Cardiac septum (tissue), 1 donor: ENCODE measurements at regions of chr14 and their contacts with region 1.

Region 1: DNA sequence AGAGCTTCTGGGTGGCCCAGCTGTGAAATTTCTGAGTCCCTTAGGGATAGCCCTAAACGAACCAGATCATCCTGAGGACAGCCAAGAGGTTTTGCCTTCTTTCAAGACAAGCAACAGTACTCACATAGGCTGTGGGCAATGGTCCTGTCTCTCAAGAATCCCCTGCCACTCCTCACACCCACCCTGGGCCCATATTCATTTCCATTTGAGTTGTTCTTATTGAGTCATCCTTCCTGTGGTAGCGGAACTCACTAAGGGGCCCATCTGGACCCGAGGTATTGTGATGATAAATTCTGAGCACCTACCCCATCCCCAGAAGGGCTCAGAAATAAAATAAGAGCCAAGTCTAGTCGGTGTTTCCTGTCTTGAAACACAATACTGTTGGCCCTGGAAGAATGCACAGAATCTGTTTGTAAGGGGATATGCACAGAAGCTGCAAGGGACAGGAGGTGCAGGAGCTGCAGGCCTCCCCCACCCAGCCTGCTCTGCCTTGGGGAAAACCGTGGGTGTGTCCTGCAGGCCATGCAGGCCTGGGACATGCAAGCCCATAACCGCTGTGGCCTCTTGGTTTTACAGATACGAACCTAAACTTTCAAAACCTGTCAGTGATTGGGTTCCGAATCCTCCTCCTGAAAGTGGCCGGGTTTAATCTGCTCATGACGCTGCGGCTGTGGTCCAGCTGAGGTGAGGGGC is 38.9 kb downstream of the DAD1 start:
- DNase-seq: no peak

Region 2: GRCh38 chr14:22432348-22432976 is 117.7 kb before region 1 on chr14:
- intact Hi-C with region 1: loop called (anchors 5 kb)
- DNase-seq: no peak

Region 3: GRCh38 chr14:22483863-22484593 is 66.1 kb before region 1 on chr14:
- intact Hi-C with region 1: loop called (anchors 2 kb)
- DNase-seq: no peak

Region 4: GRCh38 chr14:22510527-22511110 is 39.5 kb before region 1 on chr14:
- intact Hi-C with region 1: loop called (anchors 5 kb)
- DNase-seq: no peak